ENCODE measurements at regions of chr6 and their contacts with region 1.

Region 1: DNA sequence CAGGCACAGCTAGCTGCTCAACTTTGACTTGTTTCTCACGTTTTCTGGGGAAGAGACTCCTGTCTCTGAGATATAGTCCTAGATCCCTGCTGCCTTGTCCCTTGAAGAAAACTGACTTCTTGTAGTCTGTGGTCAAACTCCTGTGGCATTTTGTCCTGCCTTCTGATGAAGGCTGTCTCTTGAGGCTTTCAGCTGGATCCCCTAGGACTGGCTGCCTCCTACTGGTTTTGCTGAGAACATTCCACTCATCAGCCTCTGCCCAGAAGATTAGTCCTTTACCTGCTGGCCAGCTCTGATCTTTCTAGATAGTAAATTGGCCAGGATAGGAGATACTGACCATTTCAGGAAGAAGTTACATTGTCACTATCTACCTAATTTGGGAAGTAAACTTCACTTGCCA is 71.9 kb upstream of the CNR1 start:
- DNase-seq: peak; percentile 51
- ATAC-seq: peak; percentile 93
- H3K4me3 Mint-ChIP-seq: no peak overlapping the region
- H3K27ac Mint-ChIP-seq: no peak overlapping the region
- H3K4me1 Mint-ChIP-seq: no peaks in the 10 kb centered on the region
- H3K27me3 Mint-ChIP-seq: 0 out of 2 replicates have a peak, but pooled peaks cover 7% of the 10 kb centered on the region
- CTCF ChIP-seq: peak; percentile 51

Region 2: GRCh38 chr6:87929843-87930288 is 308.2 kb before region 1 on chr6:
- CTCF ChIA-PET with region 1: interaction called, 23 read pairs
- POLR2A ChIA-PET with region 1: no interaction called
- DNase-seq: peak; percentile 85
- ATAC-seq: peak; percentile 97
- H3K4me3 Mint-ChIP-seq: no peak overlapping the region
- H3K27ac Mint-ChIP-seq: no peak overlapping the region
- H3K4me1 Mint-ChIP-seq: peaks cover 33% of the 10 kb centered on the region
- H3K27me3 Mint-ChIP-seq: no peaks in the 10 kb centered on the region; the same call in 1 of the 2 replicates
- CTCF ChIP-seq: peak; percentile 79

Region 3: DNA sequence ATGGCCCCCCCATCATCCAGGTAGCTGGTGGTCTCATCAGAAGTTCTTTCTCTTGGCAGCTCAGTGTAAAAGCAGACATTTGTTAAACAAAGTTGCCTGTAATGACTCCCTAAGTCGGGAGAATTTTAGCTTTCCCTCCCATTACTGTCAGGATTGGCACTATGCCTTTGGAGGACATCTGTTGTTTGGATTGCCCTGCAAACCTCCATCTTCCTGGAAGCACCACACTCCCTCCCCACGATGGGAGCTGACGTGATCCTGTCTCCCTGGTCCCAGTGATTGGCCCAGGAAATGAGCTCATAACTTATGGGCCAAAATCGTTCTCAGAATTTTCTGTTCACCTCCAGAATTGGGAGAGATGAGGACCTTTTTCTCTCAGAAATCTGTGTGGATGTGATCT is 29.3 kb before region 1 on chr6:
- CTCF ChIA-PET with region 1: no interaction called
- POLR2A ChIA-PET with region 1: no interaction called
- DNase-seq: no peak
- ATAC-seq: no peak
- H3K4me3 Mint-ChIP-seq: no peak overlapping the region
- H3K27ac Mint-ChIP-seq: no peak overlapping the region
- H3K4me1 Mint-ChIP-seq: peaks cover 5% of the 10 kb centered on the region; the same call in 1 of the 2 replicates
- H3K27me3 Mint-ChIP-seq: 0 out of 2 replicates have a peak, but pooled peaks cover 3% of the 10 kb centered on the region
- CTCF ChIP-seq: no peak

Region 4: GRCh38 chr6:88311561-88311960 is 73.5 kb after region 1 on chr6:
- CTCF ChIA-PET with region 1: no interaction called
- POLR2A ChIA-PET with region 1: no interaction called
- DNase-seq: no peak
- ATAC-seq: no peak
- H3K4me3 Mint-ChIP-seq: no peak overlapping the region
- H3K27ac Mint-ChIP-seq: no peak overlapping the region
- H3K4me1 Mint-ChIP-seq: no peaks in the 10 kb centered on the region
- H3K27me3 Mint-ChIP-seq: no peaks in the 10 kb centered on the region
- CTCF ChIP-seq: no peak